ENCODE measurements at regions of chrX and their contacts with region 1.

Region 1: GRCh38 chrX:38803586-38804431 is 2.5 kb downstream of the MID1IP1 start:
- DNase-seq: peak; percentile 69
- H3K4me3 Mint-ChIP-seq: peak overlapping the region; percentile 89
- H3K27ac Mint-ChIP-seq: peak overlapping the region; percentile 91
- H3K4me1 Mint-ChIP-seq: peaks cover 15% of the 10 kb centered on the region
- H3K27me3 Mint-ChIP-seq: no peaks in the 10 kb centered on the region

Region 2: GRCh38 chrX:38837389-38837788 is 33.6 kb after region 1 on chrX:
- intact Hi-C with region 1: no loop called
- DNase-seq: no peak
- H3K4me3 Mint-ChIP-seq: no peak overlapping the region
- H3K27ac Mint-ChIP-seq: no peak overlapping the region
- H3K4me1 Mint-ChIP-seq: no peaks in the 10 kb centered on the region
- H3K27me3 Mint-ChIP-seq: peaks cover 3% of the 10 kb centered on the region

Region 3: GRCh38 chrX:38973317-38973716 is 169.5 kb after region 1 on chrX:
- intact Hi-C with region 1: loop called (anchors 5 kb)
- DNase-seq: no peak
- H3K4me3 Mint-ChIP-seq: no peak overlapping the region
- H3K27ac Mint-ChIP-seq: no peak overlapping the region
- H3K4me1 Mint-ChIP-seq: peaks cover 7% of the 10 kb centered on the region
- H3K27me3 Mint-ChIP-seq: no peaks in the 10 kb centered on the region

Region 4: DNA sequence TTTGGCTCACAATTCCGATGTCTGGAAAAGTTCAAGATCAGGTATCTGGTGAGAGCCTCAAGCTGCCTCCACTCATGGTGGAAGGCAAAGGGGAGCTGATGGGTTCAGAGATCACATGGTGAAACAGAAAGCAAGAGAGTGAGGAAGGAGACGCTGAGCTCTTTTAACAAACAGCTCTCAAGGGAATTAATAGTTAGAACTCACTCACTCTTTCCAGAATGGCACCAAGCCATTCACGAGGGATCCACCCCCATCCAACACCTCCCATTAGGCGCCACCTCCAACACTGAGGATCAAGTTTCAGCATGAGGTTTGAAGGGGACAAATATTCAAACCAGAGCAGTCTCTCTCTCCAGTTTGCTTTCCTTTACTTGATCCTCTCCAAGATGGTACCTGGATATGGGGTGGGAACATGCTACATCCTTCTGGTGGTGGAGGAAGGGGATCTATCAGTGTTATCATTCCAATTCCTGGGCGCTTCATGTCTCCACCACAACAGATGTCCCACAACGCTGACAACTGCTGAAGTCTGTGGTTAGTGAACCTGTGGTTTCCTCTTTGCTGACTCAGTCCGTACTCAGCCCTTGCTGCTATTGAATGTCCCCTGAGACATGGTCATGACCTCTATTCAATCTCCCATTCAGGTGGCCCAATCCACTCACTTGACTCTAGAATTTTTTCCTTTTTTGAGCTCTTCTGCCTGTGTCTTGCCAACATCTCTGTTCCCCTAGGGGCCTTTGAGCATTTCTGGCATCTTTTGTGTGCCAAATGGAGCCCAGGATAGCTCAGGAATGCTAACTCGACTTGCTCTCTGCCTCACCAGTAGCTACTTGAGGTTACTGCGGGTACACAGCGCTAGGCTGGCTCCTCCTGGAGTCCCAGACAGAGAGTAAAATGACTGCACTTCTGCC is 392.6 kb after region 1 on chrX:
- intact Hi-C with region 1: loop called (anchors 5 kb)
- DNase-seq: peak; percentile 44
- H3K4me3 Mint-ChIP-seq: peak overlapping the region; percentile 58
- H3K27ac Mint-ChIP-seq: peak overlapping the region; percentile 87
- H3K4me1 Mint-ChIP-seq: peaks cover 52% of the 10 kb centered on the region
- H3K27me3 Mint-ChIP-seq: no peaks in the 10 kb centered on the region

Region 5: GRCh38 chrX:40013266-40014195 is 1209.7 kb after region 1 on chrX:
- intact Hi-C with region 1: loop called (anchors 5 kb)
- DNase-seq: peak; percentile 43
- H3K4me3 Mint-ChIP-seq: peak overlapping the region; percentile 74
- H3K27ac Mint-ChIP-seq: peak overlapping the region; percentile 75
- H3K4me1 Mint-ChIP-seq: peaks cover 11% of the 10 kb centered on the region
- H3K27me3 Mint-ChIP-seq: peaks cover 6% of the 10 kb centered on the region

Region 6: GRCh38 chrX:40175511-40176350 is 1371.9 kb after region 1 on chrX:
- intact Hi-C with region 1: loop called (anchors 2 kb)
- DNase-seq: peak; percentile 61
- H3K4me3 Mint-ChIP-seq: peak overlapping the region; percentile 82
- H3K27ac Mint-ChIP-seq: peak overlapping the region; percentile 99
- H3K4me1 Mint-ChIP-seq: peaks cover 37% of the 10 kb centered on the region
- H3K27me3 Mint-ChIP-seq: no peaks in the 10 kb centered on the region

Measured in activated T-helper 1 cell treated with anti-CD3 and anti-CD28 coated beads, Interleukin-12 subunit alpha, Interleukin-12 subunit beta, Interleukin-2, Interleukin-4 antibody, amounts not matched to agents 30 ng/mL and 10 ng/mL and 1 ng/mL, durations not matched to agents 14 hours and 24 hours and 36 hours (primary cell).